Naive thymus-derived CD4-positive, alpha-beta T cell (primary cell): ENCODE measurements at regions of chr3 and their contacts with region 1.

Region 1: GRCh38 chr3:28295898-28296490 is 52.5 kb upstream of the ZCWPW2 start:
- DNase-seq: no peak
- ATAC-seq: peak; percentile 24
- H3K4me3 ChIP-seq: peak overlapping the region; percentile 19
- H3K4me3 Mint-ChIP-seq: peak overlapping the region in 5 of 10 donors; percentile 2 to 51 (median 23)
- H3K27ac ChIP-seq: no peak overlapping the region
- H3K27ac Mint-ChIP-seq: peak overlapping the region in 2 of 9 donors; percentile 11 to 75
- H3K4me1 ChIP-seq: peaks cover 0 to 16% of the 10 kb centered on the region in 2 donors
- H3K4me1 Mint-ChIP-seq: peaks cover 15 to 38% (median 22%) of the 10 kb centered on the region in 7 donors
- H3K27me3 ChIP-seq: no peaks in the 10 kb centered on the region
- H3K27me3 Mint-ChIP-seq: no peaks in the 10 kb centered on the region

Region 2: DNA sequence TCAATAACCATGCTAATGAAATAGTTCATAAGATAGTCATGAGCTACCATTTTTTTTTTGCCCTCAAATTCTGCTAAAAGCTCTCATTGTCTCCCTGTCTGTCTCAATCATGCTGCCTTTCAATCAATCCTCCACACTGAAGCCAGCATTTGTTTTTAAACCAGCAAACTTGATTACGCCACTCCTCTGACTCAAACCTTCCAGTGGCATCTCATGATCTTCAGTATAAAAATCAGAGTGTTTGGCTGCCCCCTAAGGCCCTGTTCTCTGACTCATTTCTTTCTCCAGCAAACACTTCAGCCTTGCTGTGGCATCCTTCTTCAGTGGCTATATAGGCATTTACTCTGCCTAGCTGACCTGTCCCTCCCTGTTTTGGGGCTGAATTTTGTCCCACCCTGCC is 537.9 kb before region 1 on chr3:
- CTCF ChIA-PET with region 1: no interaction called
- POLR2A ChIA-PET with region 1: no interaction called
- intact Hi-C with region 1: no loop called
- DNase-seq: peak in 1 of 9 donors; percentile 28
- ATAC-seq: no peak
- H3K4me3 ChIP-seq: no peak overlapping the region
- H3K4me3 Mint-ChIP-seq: no peak overlapping the region
- H3K27ac ChIP-seq: no peak overlapping the region
- H3K27ac Mint-ChIP-seq: no peak overlapping the region
- H3K4me1 ChIP-seq: no peaks in the 10 kb centered on the region
- H3K4me1 Mint-ChIP-seq: peaks cover 0 to 6% (median 1%) of the 10 kb centered on the region in 7 donors
- H3K27me3 ChIP-seq: no peaks in the 10 kb centered on the region
- H3K27me3 Mint-ChIP-seq: no peaks in the 10 kb centered on the region

Region 3: DNA sequence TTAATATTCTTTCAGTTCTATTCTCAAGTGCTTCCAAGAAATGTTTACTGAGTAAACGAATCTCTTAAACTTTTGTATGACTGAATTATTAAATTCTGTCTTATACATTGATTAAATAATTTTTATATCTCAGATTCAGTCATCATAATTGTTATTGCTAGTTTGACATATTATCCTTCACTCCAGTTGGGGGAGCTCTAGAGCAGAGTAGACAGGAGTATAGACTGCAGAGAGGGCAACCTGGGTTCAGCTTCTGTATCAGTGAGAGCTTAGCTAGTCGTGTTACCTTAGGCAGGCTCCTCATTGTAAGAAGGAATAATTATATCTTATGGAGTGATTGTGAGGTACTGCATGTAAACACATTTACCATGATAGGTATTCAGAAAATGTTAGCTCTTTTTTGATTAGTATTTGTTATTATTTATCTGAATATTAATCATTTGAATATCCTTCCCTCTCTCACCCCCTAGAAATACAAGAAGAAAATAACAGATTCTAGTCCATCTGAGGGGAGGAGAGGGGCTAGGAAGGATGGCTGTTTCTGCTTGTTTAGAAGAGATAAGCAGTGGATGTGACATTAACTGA is 21.5 kb after region 1 on chr3:
- CTCF ChIA-PET with region 1: no interaction called
- POLR2A ChIA-PET with region 1: no interaction called
- intact Hi-C with region 1: loop called in 1 of 2 experiments (anchors 2 kb)
- DNase-seq: peak in 7 of 9 donors; percentile 7 to 47 (median 34)
- ATAC-seq: peak; percentile 95
- H3K4me3 ChIP-seq: no peak overlapping the region
- H3K4me3 Mint-ChIP-seq: no peak overlapping the region
- H3K27ac ChIP-seq: no peak overlapping the region
- H3K27ac Mint-ChIP-seq: no peak overlapping the region
- H3K4me1 ChIP-seq: no peaks in the 10 kb centered on the region
- H3K4me1 Mint-ChIP-seq: peaks cover 0 to 19% (median 6%) of the 10 kb centered on the region in 7 donors
- H3K27me3 ChIP-seq: no peaks in the 10 kb centered on the region
- H3K27me3 Mint-ChIP-seq: no peaks in the 10 kb centered on the region

Region 4: DNA sequence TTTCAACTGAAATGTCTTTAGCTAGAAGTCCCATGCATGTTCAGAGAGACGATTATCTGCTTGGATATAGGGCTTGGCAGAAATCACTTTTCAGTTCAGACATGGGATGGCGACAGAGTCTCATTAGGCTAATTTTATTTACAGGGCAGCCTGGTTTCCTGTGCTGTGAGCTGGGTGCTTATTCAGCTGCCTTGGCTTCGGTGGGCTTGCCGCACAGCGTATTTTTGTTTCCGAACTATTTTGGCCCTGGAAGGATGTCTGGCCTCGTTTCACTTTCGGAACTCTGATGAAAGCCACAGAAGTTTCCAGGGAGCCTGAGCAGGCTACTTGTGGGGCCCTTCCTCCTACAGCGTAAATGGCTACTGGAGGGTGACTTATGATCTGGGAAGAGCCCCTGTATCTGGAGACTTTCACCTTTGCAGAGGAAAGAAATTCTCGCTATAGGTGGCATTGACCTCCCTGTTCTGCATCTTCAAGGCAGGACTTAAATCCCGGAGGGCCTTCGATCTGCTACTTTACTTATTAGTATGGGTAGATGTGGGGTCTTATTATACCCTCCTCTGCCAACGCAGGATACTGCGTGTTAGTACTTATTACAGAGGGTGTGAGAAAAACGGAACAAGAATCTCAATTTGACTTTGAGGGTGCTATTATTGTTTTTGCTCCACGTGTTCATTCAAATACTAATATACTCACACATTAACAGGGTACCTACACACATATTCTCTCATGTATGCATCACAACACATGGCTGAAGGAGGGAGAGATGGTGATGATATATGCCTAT is 620.9 kb after region 1 on chr3:
- CTCF ChIA-PET with region 1: no interaction called
- POLR2A ChIA-PET with region 1: no interaction called
- intact Hi-C with region 1: no loop called
- DNase-seq: peak in 4 of 9 donors; percentile 0 to 23 (median 7)
- ATAC-seq: no peak
- H3K4me3 ChIP-seq: no peak overlapping the region
- H3K4me3 Mint-ChIP-seq: peak overlapping the region in 2 of 10 donors; percentile 26 to 43
- H3K27ac ChIP-seq: no peak overlapping the region
- H3K27ac Mint-ChIP-seq: no peak overlapping the region
- H3K4me1 ChIP-seq: no peaks in the 10 kb centered on the region
- H3K4me1 Mint-ChIP-seq: peaks cover 0 to 18% (median 4%) of the 10 kb centered on the region in 7 donors
- H3K27me3 ChIP-seq: no peaks in the 10 kb centered on the region
- H3K27me3 Mint-ChIP-seq: peaks cover 0 to 14% (median 0%) of the 10 kb centered on the region in 5 donors